GM12878 (cell line): ENCODE measurements at regions of chr17 and their contacts with region 1.

Region 1: GRCh38 chr17:16285957-16286640 is 67.2 kb downstream of the CENPV start:
- DNase-seq: peak; percentile 96
- ATAC-seq: peak; percentile 89
- H3K4me3 ChIP-seq: peak overlapping the region; percentile 53; the same call in 1 of the 2 replicates
- H3K27ac ChIP-seq: peak overlapping the region; percentile 92
- H3K4me1 ChIP-seq: peaks cover 40% of the 10 kb centered on the region
- H3K27me3 ChIP-seq: no peaks in the 10 kb centered on the region
- CTCF ChIP-seq: peak; percentile 58 to 65 (median 63)
- EP300 ChIP-seq: peak in 1 of 2 experiments; percentile 26; a peak in 1 of 4 replicates
- POLR2A ChIP-seq: peak; percentile 85
- RAD21 ChIP-seq: peak; percentile 59

Region 2: GRCh38 chr17:16129441-16130205 is 156.5 kb before region 1 on chr17:
- CTCF ChIA-PET with region 1: no interaction called
- POLR2A ChIA-PET with region 1: no interaction called
- RAD21 ChIA-PET with region 1: no interaction called
- SMC1A ChIA-PET with region 1: no interaction called
- in situ Hi-C with region 1: no loop called
- intact Hi-C with region 1: no loop called
- DNase-seq: no peak
- ATAC-seq: no peak
- H3K4me3 ChIP-seq: no peak overlapping the region
- H3K27ac ChIP-seq: no peak overlapping the region
- H3K4me1 ChIP-seq: no peaks in the 10 kb centered on the region
- H3K27me3 ChIP-seq: no peaks in the 10 kb centered on the region
- CTCF ChIP-seq: no peak
- EP300 ChIP-seq: no peak
- POLR2A ChIP-seq: no peak
- RAD21 ChIP-seq: no peak

Region 3: DNA sequence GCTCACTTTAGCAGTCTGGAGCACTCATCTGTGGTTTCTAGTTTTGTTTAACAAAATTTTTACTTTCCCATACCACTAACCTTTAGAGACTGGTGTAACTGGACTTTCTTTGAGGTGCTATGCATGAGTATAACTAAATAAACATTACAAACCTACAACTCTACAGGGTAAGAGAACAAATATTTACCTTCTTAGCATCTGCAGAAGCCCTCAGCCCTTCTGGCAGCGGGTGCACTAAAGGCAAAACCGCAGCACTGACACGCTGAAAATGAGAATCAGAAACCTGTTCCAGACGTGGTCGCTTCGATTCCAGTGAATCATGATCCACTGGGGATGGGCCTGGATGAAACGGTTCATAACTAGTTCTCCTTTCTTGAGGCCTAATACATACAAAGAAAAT is 114.5 kb before region 1 on chr17:
- CTCF ChIA-PET with region 1: no interaction called
- POLR2A ChIA-PET with region 1: no interaction called
- RAD21 ChIA-PET with region 1: no interaction called
- SMC1A ChIA-PET with region 1: no interaction called
- in situ Hi-C with region 1: no loop called
- intact Hi-C with region 1: no loop called
- DNase-seq: no peak
- ATAC-seq: no peak
- H3K4me3 ChIP-seq: no peak overlapping the region
- H3K27ac ChIP-seq: no peak overlapping the region
- H3K4me1 ChIP-seq: no peaks in the 10 kb centered on the region
- H3K27me3 ChIP-seq: no peaks in the 10 kb centered on the region
- CTCF ChIP-seq: no peak
- EP300 ChIP-seq: no peak
- POLR2A ChIP-seq: no peak
- RAD21 ChIP-seq: no peak

Region 4: GRCh38 chr17:16269658-16270057 is 16.4 kb before region 1 on chr17:
- CTCF ChIA-PET with region 1: interaction called, 8 read pairs
- POLR2A ChIA-PET with region 1: interaction called, 5 read pairs
- RAD21 ChIA-PET with region 1: interaction called, 3 read pairs
- SMC1A ChIA-PET with region 1: interaction called, 18 read pairs
- in situ Hi-C with region 1: no loop called
- intact Hi-C with region 1: no loop called
- DNase-seq: no peak
- ATAC-seq: no peak
- H3K4me3 ChIP-seq: no peak overlapping the region
- H3K27ac ChIP-seq: no peak overlapping the region
- H3K4me1 ChIP-seq: peaks cover 16% of the 10 kb centered on the region
- H3K27me3 ChIP-seq: no peaks in the 10 kb centered on the region
- CTCF ChIP-seq: no peak
- EP300 ChIP-seq: no peak
- POLR2A ChIP-seq: no peak
- RAD21 ChIP-seq: no peak

Region 5: DNA sequence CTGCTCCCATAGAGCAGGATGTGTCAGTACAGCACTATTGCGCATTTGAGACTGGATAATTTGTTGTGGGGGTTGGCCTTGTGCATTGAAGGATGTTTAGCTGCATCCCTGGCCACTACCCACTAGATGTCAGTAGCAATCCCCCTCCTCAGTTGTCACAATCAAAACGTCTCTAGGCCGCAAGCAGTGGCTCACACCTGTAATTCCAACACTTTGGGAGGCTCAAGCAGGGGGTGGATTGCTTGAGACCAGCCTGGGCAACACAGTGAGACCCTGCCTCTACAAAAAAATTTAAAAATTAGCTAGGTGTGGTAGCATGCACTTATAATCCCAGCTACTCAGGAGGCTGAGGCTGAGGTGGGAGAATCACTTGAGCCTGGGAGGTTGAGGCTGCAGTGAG is 18.7 kb after region 1 on chr17:
- CTCF ChIA-PET with region 1: interaction called, 30 read pairs
- POLR2A ChIA-PET with region 1: interaction called, 8 read pairs
- RAD21 ChIA-PET with region 1: interaction called, 6 read pairs
- SMC1A ChIA-PET with region 1: interaction called, 15 read pairs
- in situ Hi-C with region 1: no loop called
- intact Hi-C with region 1: no loop called
- DNase-seq: no peak
- ATAC-seq: peak; percentile 78
- H3K4me3 ChIP-seq: no peak overlapping the region
- H3K27ac ChIP-seq: no peak overlapping the region
- H3K4me1 ChIP-seq: no peaks in the 10 kb centered on the region
- H3K27me3 ChIP-seq: no peaks in the 10 kb centered on the region
- CTCF ChIP-seq: peak; percentile 46 to 61 (median 51)
- EP300 ChIP-seq: no peak
- POLR2A ChIP-seq: no peak
- RAD21 ChIP-seq: peak; percentile 45

Region 6: DNA sequence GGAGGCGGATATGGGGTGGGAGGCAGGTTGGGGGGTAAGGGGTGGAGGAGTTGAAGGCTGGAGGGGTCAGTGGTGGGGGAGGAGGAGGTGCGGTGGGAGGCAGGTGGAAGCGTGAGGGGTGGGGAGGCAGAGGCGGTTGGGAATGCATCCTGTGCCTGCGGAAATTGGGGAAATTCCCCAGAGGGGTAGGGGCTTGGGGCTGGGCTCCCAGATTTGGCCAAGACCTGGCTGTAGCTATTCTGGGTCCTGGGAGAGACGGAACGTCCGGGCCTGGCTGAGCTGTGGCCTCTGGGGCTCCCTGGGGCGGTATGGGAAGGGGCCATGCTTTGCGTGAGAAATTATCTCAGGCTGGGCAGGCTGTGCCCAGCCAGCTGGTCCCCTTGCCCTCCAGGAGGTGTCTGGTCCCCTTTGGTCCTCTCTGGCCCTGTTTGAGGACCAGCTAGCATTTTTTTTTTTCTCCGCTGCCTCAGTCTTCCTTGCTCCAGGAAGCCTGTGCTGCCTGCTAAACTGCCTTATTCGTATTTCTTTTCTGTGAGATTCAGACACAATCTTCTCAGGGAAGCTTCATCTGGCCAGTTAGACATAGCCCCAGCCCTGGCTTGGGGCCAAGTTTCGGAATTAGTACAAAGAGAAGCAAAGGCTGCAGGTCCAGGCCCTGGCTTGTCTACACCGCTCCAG is 122.0 kb after region 1 on chr17:
- CTCF ChIA-PET with region 1: interaction called, 3 read pairs
- POLR2A ChIA-PET with region 1: interaction called, 8 read pairs
- RAD21 ChIA-PET with region 1: interaction called, 20 read pairs
- SMC1A ChIA-PET with region 1: no interaction called
- in situ Hi-C with region 1: no loop called
- intact Hi-C with region 1: no loop called
- DNase-seq: peak; percentile 96
- ATAC-seq: peak; percentile 92
- H3K4me3 ChIP-seq: peak overlapping the region; percentile 37; the same call in 1 of the 2 replicates
- H3K27ac ChIP-seq: peak overlapping the region; percentile 99
- H3K4me1 ChIP-seq: no peaks in the 10 kb centered on the region; the same call in none of the 2 replicates
- H3K27me3 ChIP-seq: no peaks in the 10 kb centered on the region
- CTCF ChIP-seq: no peak
- EP300 ChIP-seq: peak in 1 of 2 experiments; percentile 7; a peak in 1 of 4 replicates
- POLR2A ChIP-seq: no peak; the same call in 1 of the 2 replicates
- RAD21 ChIP-seq: peak; percentile 13; the same call in 1 of the 2 replicates

Region 7: GRCh38 chr17:16438557-16439302 is 152.6 kb after region 1 on chr17:
- CTCF ChIA-PET with region 1: interaction called, 8 read pairs
- POLR2A ChIA-PET with region 1: interaction called, 5 read pairs
- RAD21 ChIA-PET with region 1: interaction called, 6 read pairs
- SMC1A ChIA-PET with region 1: interaction called, 4 read pairs
- in situ Hi-C with region 1: no loop called
- intact Hi-C with region 1: loop called (anchors 5 kb)
- DNase-seq: peak; percentile 98
- ATAC-seq: peak; percentile 87
- H3K4me3 ChIP-seq: peak overlapping the region; percentile 97
- H3K27ac ChIP-seq: peak overlapping the region; percentile 79
- H3K4me1 ChIP-seq: peaks cover 15% of the 10 kb centered on the region
- H3K27me3 ChIP-seq: no peaks in the 10 kb centered on the region
- CTCF ChIP-seq: no peak
- EP300 ChIP-seq: peak in 1 of 2 experiments; percentile 28; a peak in 1 of 4 replicates
- POLR2A ChIP-seq: peak; percentile 96
- RAD21 ChIP-seq: no peak

Region 8: DNA sequence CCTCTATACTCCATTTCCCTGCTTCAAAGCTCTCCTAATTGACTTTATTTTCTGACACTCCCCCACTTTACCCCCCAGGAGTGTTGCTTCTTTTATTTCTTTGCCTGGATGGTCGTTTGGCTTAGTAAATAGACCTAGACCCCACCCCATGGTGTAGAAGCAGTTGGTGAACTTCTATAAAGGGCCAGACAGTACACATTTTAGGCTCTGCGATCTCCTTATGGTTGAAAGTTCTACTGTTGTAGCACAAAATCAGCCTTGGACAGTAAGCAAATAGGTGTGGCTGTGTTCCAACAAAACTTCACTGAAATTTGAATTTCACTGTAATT is 251.0 kb after region 1 on chr17:
- CTCF ChIA-PET with region 1: no interaction called
- POLR2A ChIA-PET with region 1: no interaction called
- RAD21 ChIA-PET with region 1: no interaction called
- SMC1A ChIA-PET with region 1: no interaction called
- in situ Hi-C with region 1: no loop called
- intact Hi-C with region 1: no loop called
- DNase-seq: no peak
- ATAC-seq: no peak
- H3K4me3 ChIP-seq: no peak overlapping the region
- H3K27ac ChIP-seq: no peak overlapping the region
- H3K4me1 ChIP-seq: 0 out of 2 replicates have a peak, but pooled peaks cover 4% of the 10 kb centered on the region
- H3K27me3 ChIP-seq: no peaks in the 10 kb centered on the region
- CTCF ChIP-seq: no peak
- EP300 ChIP-seq: no peak
- POLR2A ChIP-seq: no peak
- RAD21 ChIP-seq: no peak